Esophagus muscularis mucosa (tissue), 4 donors: ENCODE measurements at regions of chr5 and their contacts with region 1.

Region 1: GRCh38 chr5:131671994-131672655 is 37.1 kb upstream of the RAPGEF6 start:
- DNase-seq: no peak
- H3K4me3 ChIP-seq: peak overlapping the region; percentile 1 to 28 (median 20)
- H3K27ac ChIP-seq: peak overlapping the region; percentile 83 to 90 (median 86)
- H3K4me1 ChIP-seq: peaks cover 47 to 72% (median 68%) of the 10 kb centered on the region in 4 donors
- H3K27me3 ChIP-seq: no peaks in the 10 kb centered on the region
- CTCF ChIP-seq: no peak
- EP300 ChIP-seq: peak; percentile 26
- POLR2A ChIP-seq: no peak

Region 2: GRCh38 chr5:131634996-131635754 is 37.0 kb before region 1 on chr5 and contains the start of gene RAPGEF6:
- intact Hi-C with region 1: loop called (anchors 5 kb)
- DNase-seq: peak; percentile 99
- H3K4me3 ChIP-seq: peak within 1 kb of the TSS; percentile 69 to 79 (median 74)
- H3K27ac ChIP-seq: peak within 1 kb of the TSS; percentile 92 to 98 (median 97)
- H3K4me1 ChIP-seq: peaks cover 19 to 50% (median 47%) of the 10 kb centered on the region in 4 donors
- H3K27me3 ChIP-seq: no peaks in the 10 kb centered on the region
- CTCF ChIP-seq: no peak
- EP300 ChIP-seq: no peak
- POLR2A ChIP-seq: peak; percentile 57
- total RNA-seq, gene RAPGEF6: 17.2 to 23.3 (median 20.1) TPM